Prostate gland (tissue), 2 donors: ENCODE measurements at regions of chr6 and their contacts with region 1.

Region 1: GRCh38 chr6:36546920-36547645 is at the start of gene STK38:
- DNase-seq: peak; percentile 89
- H3K4me3 ChIP-seq: peak within 1 kb of the TSS; percentile 72 to 90
- H3K27ac ChIP-seq: peak within 1 kb of the TSS; percentile 94 to 96
- H3K4me1 ChIP-seq: peaks cover 3% of the 10 kb centered on the region
- H3K27me3 ChIP-seq: no peaks in the 10 kb centered on the region
- CTCF ChIP-seq: no peak
- POLR2A ChIP-seq: peak; percentile 100
- total RNA-seq, gene STK38: 16.5 to 17.7 TPM

Region 2: GRCh38 chr6:36423101-36423824 is 123.8 kb before region 1 on chr6:
- intact Hi-C with region 1: loop called (anchors 5 kb)
- DNase-seq: peak; percentile 99
- H3K4me3 ChIP-seq: peak overlapping the region; percentile 51 to 55
- H3K27ac ChIP-seq: peak overlapping the region; percentile 91 to 92
- H3K4me1 ChIP-seq: no peaks in the 10 kb centered on the region
- H3K27me3 ChIP-seq: no peaks in the 10 kb centered on the region
- CTCF ChIP-seq: peak; percentile 26 to 86 (median 76)
- POLR2A ChIP-seq: peak; percentile 72

Region 3: DNA sequence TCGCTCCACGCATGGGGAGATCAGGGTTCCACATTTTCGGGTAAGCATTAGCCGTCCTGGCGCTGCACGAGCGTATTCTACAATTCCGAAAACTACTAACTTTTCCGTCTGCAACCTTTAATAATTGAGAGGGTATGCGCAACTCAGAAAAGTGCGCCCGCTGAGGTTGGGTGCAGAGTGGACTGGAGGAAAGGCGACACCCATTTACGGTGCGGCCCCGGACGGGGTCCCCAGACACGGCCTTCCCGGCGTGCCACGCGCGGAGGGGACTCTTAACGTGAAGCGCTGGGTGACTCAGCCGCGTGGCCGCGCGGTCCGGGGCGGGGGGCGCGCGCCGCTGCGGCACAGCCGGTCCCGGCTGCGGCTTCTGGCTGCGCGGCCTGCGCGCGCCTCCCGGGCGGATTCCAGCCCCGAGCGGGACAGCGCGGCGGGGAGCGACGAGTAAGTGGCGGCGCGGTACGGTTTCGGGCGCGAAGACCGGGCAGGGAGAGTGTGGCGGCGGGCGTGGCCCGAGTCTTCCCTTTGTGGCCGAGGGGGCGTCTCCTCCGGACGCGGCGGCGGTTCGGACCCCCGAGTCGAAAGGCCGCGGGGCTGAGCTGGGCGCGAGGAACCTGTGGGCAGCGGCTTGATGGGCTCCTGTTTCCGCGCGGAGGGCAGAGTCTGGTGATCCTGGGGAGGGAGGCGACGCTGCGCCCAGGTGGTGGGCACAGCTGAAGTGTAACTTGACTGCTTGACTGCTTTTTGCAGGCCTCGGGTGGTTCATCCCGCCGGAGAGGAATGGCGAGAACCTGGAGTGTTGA is 104.2 kb before region 1 on chr6 and contains the starts of genes KCTD20 and PXT1:
- intact Hi-C with region 1: loop called (anchors 2 kb)
- DNase-seq: peak; percentile 81
- H3K4me3 ChIP-seq: peak within 1 kb of the TSS; percentile 84 to 93
- H3K27ac ChIP-seq: peak within 1 kb of the TSS; percentile 97
- H3K4me1 ChIP-seq: peaks cover 3% of the 10 kb centered on the region
- H3K27me3 ChIP-seq: no peaks in the 10 kb centered on the region
- CTCF ChIP-seq: peak in 1 of 4 experiments; percentile 15
- POLR2A ChIP-seq: peak; percentile 72
- total RNA-seq, gene KCTD20: 33.7 to 44.1 TPM
- total RNA-seq, gene PXT1: 6.3 TPM in 1 of 2 donors, not detected in the other

Region 4: GRCh38 chr6:36514554-36515456 is 32.3 kb before region 1 on chr6:
- intact Hi-C with region 1: no loop called
- DNase-seq: no peak
- H3K4me3 ChIP-seq: no peak overlapping the region
- H3K27ac ChIP-seq: peak overlapping the region; percentile 7 to 33
- H3K4me1 ChIP-seq: peaks cover 6% of the 10 kb centered on the region
- H3K27me3 ChIP-seq: no peaks in the 10 kb centered on the region
- CTCF ChIP-seq: no peak
- POLR2A ChIP-seq: no peak

Region 5: GRCh38 chr6:36578431-36578830 is 31.3 kb after region 1 on chr6:
- intact Hi-C with region 1: loop called (anchors 2 kb)
- DNase-seq: no peak
- H3K4me3 ChIP-seq: no peak overlapping the region
- H3K27ac ChIP-seq: peak overlapping the region in 1 of 2 donors; percentile 76
- H3K4me1 ChIP-seq: no peaks in the 10 kb centered on the region
- H3K27me3 ChIP-seq: no peaks in the 10 kb centered on the region
- CTCF ChIP-seq: no peak
- POLR2A ChIP-seq: no peak

Region 6: DNA sequence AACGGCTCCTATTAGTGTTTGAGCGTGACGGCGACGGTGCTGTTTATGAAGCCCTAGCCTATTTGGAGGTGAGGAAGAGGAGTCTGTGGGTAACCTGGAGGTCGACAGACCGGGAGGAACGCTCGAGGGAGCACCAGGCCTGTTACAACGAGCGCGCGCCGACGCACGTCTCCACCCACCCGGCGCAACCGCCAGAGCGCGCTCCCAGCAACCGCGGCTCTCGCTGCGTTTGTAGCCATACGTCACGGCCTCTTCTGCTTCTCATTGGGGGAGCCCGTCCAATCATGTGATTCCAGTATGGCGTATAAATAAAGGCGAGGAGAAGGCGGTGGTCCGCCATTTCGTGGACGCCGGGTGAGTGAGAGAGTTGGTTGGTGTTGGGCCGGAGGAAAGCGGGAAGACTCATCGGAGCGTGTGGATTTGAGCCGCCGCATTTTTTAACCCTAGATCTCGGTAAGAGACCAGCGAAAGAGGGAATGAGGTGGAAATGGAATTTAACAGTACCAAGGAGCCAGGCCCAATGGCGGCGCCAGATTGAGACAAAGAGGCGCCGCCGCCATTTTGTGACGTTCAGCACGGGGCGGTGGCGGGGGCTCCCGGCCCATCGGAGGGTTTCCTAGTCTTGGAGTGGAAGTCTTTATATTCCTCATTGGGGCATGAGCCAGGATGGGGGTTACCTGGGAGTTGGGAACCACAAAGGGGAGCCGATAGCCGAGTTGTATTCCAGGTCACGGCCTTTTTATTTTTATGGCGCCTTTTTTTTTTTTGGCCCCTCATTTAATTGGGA is 47.1 kb after region 1 on chr6 and contains the start of gene SRSF3:
- intact Hi-C with region 1: loop called (anchors 1 kb)
- DNase-seq: peak; percentile 98
- H3K4me3 ChIP-seq: peak within 1 kb of the TSS; percentile 65 to 74
- H3K27ac ChIP-seq: peak within 1 kb of the TSS; percentile 98 to 99
- H3K4me1 ChIP-seq: no peaks in the 10 kb centered on the region
- H3K27me3 ChIP-seq: no peaks in the 10 kb centered on the region
- CTCF ChIP-seq: peak; percentile 46 to 89 (median 64)
- POLR2A ChIP-seq: peak; percentile 97
- total RNA-seq, gene SRSF3: 111 to 153 TPM

Region 7: DNA sequence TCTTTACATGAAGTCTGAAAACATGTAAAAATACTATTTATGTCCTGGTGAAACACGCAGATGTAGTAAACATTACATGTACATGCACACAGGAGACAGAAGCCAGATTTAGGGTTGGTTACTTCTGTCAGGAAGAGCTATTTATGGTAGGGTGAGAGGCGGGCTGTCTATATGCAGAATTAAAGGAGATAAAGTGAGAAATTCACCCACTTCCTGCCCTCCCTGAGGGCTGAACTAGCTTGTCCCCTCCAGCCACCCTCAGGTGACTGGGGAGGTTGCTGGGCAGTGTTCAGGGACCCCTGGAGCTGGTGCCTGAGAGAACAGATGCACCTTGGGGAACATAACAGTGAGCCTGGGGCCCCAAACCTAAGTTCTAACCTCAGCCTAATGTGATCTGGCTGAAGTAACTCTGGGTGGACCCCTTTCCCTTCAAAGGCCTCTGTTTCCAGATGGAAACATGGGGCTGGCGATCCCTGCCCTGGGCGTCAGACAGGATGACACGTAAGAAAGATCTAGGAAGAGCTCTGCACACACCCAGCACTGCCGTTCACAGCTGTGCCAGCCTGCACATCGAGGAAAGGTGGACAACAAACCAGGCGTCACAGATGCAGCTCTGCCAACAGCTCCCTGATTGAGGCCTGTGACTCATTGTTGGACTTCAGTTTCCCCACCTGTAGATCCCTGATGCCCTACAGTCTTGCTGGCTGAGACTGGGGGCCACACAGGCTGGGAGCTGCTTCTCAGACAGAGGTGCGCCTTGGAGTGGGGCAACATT is 408.8 kb after region 1 on chr6:
- intact Hi-C with region 1: no loop called
- DNase-seq: no peak
- H3K4me3 ChIP-seq: no peak overlapping the region
- H3K27ac ChIP-seq: no peak overlapping the region
- H3K4me1 ChIP-seq: no peaks in the 10 kb centered on the region
- H3K27me3 ChIP-seq: no peaks in the 10 kb centered on the region
- CTCF ChIP-seq: no peak
- POLR2A ChIP-seq: no peak